Right ventricle myocardium inferior (tissue), 1 donor: ENCODE measurements at regions of chr20 and their contacts with region 1.

Region 1: GRCh38 chr20:13771853-13772453 is 12.8 kb downstream of the ESF1 start:
- DNase-seq: no peak
- ATAC-seq: no peak

Region 2: GRCh38 chr20:13458860-13459451 is 313.0 kb before region 1 on chr20:
- intact Hi-C with region 1: loop called (anchors 5 kb)
- DNase-seq: no peak
- ATAC-seq: peak; percentile 46